ENCODE measurements at regions of chr3 and their contacts with region 1.

Region 1: DNA sequence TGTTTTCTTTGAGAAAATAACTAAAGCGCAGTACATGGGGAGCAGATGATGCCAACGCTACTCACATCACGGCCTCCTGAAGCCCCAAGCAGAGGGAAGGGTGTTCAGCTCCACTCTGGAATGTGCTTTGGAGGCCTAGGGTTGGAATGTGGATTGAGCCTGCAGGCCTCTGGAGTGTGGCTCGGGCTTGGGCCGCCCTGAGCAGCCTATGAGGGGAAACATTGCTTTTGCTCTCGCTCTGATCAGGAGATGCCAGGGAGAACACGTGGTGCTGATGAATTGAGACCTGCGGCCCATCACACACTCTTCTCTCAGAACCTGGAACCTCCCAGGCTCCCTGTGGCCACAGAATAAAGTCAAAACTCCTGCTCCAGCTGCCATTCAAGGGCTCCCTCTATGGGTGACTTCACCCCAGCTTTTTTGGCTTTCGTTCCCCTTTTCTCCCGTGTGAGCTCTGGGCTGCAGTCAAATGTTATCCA is 23.3 kb downstream of the CCDC13 start:
- DNase-seq: no peak
- ATAC-seq: peak; percentile 35
- H3K4me3 ChIP-seq: no peak overlapping the region
- H3K4me1 ChIP-seq: no peaks in the 10 kb centered on the region
- CTCF ChIP-seq: no peak

Region 2: DNA sequence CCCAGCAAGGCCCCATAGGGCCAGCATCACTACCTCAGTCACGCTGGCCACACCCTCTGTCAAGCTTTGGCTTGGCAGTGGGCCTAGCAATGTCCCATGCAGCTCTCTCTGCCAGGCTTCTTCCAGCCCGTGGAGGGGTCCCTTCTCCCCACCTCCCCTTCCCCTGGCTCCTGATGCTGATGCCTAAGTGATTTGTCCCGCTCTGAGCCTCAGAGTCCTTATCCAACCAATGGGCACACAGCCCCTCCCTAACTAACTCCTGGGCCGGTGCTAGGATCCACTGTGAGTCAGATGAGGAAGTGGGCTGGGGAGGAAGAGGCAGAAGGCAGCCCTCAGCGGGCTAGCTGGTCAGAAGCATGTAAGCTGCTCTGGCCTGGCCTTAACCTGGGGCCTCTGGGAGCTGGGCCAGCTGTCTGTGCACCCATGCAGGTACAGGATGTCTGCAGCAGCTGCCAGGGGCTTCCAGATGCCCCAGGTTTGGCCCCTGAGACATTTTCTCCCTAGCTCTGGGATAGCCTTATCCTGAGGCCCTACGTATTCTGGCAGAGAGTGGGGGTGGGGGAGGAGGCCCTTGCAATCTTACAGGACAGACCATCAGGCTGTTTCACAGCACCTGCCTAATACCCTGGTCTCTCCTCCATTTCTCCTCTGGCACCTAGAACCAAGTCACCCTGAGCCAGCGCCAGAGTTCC is 97.0 kb before region 1 on chr3:
- intact Hi-C with region 1: loop called in 1 of 2 experiments (anchors 10 kb)
- DNase-seq: peak; percentile 48 to 85 (median 63)
- ATAC-seq: peak; percentile 87
- H3K4me3 ChIP-seq: no peak overlapping the region
- H3K4me1 ChIP-seq: peaks cover 17% of the 10 kb centered on the region
- CTCF ChIP-seq: no peak